HEK293 (cell line): ENCODE measurements at regions of chr20 and their contacts with region 1.

Region 1: GRCh38 chr20:1212607-1213396 is 9.5 kb downstream of the C20orf202 start:
- H3K4me3 ChIP-seq: no peak overlapping the region
- H3K27ac ChIP-seq: no peak overlapping the region
- H3K4me1 ChIP-seq: no peaks in the 10 kb centered on the region
- CTCF ChIP-seq: peak; percentile 69

Region 2: GRCh38 chr20:1185790-1186334 is 26.9 kb before region 1 on chr20:
- CTCF ChIA-PET with region 1: interaction called, 21 read pairs
- POLR2A ChIA-PET with region 1: no interaction called
- H3K4me3 ChIP-seq: peak overlapping the region; percentile 46
- H3K27ac ChIP-seq: no peak overlapping the region
- H3K4me1 ChIP-seq: no peaks in the 10 kb centered on the region
- CTCF ChIP-seq: peak; percentile 62

Region 3: DNA sequence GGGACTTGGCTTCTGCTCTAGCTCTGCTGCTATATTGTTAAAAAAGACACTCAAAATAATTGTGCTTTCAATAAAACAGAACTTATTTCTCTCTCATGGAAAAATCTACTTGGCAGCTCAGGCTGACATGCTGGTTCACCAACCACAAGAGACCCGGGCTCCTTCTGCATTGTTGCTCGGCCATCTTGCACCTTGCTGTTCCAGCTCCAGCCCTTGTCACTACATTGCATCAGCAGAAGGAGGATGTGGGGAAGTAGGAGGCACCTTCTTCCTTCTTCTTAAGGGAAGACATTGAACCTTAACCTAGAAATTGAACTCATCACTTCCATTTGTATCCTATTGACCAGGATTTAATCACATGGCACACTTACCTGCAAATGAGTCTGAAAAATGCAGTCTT is 16.2 kb before region 1 on chr20:
- CTCF ChIA-PET with region 1: interaction called, 12 read pairs
- POLR2A ChIA-PET with region 1: no interaction called
- H3K4me3 ChIP-seq: no peak overlapping the region
- H3K27ac ChIP-seq: no peak overlapping the region
- H3K4me1 ChIP-seq: no peaks in the 10 kb centered on the region
- CTCF ChIP-seq: no peak